Caco-2 (cell line): ENCODE measurements at regions of chr4 and their contacts with region 1.

Region 1: GRCh38 chr4:74932816-74933561 is at the start of gene PARM1:
- DNase-seq: peak; percentile 90 to 91
- H3K4me3 ChIP-seq: peak within 1 kb of the TSS; percentile 66
- H3K4me3 Mint-ChIP-seq: peak within 1 kb of the TSS; percentile 89
- H3K27ac Mint-ChIP-seq: peak within 1 kb of the TSS; percentile 53
- H3K4me1 ChIP-seq: peaks cover 5% of the 10 kb centered on the region; the same call in 1 of the 2 replicates
- H3K4me1 Mint-ChIP-seq: peaks cover 14% of the 10 kb centered on the region
- H3K27me3 ChIP-seq: peaks cover 2% of the 10 kb centered on the region
- H3K27me3 Mint-ChIP-seq: peaks cover 3% of the 10 kb centered on the region
- CTCF ChIP-seq: peak; percentile 79 to 85
- total RNA-seq, gene PARM1: 1.7 and 2.3 TPM in 2 replicates

Region 2: DNA sequence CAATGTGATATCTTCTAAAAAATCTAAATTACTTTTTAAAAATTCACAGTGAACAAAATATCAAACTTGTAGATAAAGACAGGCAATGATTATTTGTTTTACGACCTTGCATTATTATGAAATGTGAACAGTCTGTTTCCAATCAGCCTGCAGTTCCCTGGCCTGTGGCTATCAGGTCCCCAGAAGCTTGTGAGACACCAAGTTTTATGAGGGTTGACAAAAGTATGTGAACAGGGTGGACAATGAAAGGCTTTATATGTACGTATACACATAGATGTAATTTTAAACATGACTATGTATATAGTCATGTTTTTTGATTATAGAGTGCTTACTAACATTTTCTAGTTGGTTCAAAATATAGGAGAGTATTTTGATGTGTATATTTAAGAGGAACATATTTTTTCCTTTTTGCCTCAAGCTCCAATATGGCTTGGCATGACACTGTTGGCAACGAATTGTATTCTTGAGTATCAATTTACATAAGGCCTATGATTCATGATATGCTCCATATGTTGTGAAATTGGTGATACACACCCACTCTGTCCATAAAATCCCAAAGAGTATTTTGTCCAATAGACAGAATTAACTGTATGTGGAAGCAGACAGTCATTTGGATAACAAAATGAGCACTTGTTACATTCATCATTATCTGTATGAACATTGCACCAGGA is 194.4 kb before region 1 on chr4:
- CTCF ChIA-PET with region 1: no interaction called
- POLR2A ChIA-PET with region 1: no interaction called
- intact Hi-C with region 1: no loop called
- DNase-seq: no peak
- H3K4me3 ChIP-seq: no peak overlapping the region
- H3K4me3 Mint-ChIP-seq: no peak overlapping the region
- H3K27ac Mint-ChIP-seq: no peak overlapping the region
- H3K4me1 ChIP-seq: no peaks in the 10 kb centered on the region
- H3K4me1 Mint-ChIP-seq: no peaks in the 10 kb centered on the region
- H3K27me3 ChIP-seq: no peaks in the 10 kb centered on the region
- H3K27me3 Mint-ChIP-seq: no peaks in the 10 kb centered on the region
- CTCF ChIP-seq: no peak

Region 3: DNA sequence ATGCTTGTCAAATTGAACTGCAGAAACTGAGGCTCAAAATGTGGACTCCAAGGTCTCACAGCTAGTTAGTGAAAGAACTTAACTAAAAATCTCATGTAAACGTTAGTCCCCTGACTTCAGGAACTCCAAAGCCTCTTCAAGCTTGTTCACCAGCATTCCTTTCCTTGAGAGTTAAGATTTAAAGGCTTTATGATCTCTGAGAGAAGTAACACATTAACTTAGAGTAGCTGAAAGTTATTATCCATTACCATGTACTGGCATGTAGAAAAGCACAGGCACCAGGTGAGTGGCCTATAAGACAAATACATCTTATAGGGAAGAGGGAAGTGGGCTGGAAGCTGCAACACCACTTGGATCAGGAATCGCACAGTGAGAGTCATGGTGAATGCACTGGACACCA is 15.2 kb after region 1 on chr4:
- CTCF ChIA-PET with region 1: interaction called, 5 read pairs
- POLR2A ChIA-PET with region 1: no interaction called
- intact Hi-C with region 1: loop called (anchors 1 kb)
- DNase-seq: peak; percentile 44 to 64
- H3K4me3 ChIP-seq: no peak overlapping the region
- H3K4me3 Mint-ChIP-seq: peak overlapping the region; percentile 44
- H3K27ac Mint-ChIP-seq: peak overlapping the region; percentile 79
- H3K4me1 ChIP-seq: peaks cover 29% of the 10 kb centered on the region
- H3K4me1 Mint-ChIP-seq: peaks cover 21% of the 10 kb centered on the region
- H3K27me3 ChIP-seq: no peaks in the 10 kb centered on the region
- H3K27me3 Mint-ChIP-seq: no peaks in the 10 kb centered on the region
- CTCF ChIP-seq: no peak

Region 4: DNA sequence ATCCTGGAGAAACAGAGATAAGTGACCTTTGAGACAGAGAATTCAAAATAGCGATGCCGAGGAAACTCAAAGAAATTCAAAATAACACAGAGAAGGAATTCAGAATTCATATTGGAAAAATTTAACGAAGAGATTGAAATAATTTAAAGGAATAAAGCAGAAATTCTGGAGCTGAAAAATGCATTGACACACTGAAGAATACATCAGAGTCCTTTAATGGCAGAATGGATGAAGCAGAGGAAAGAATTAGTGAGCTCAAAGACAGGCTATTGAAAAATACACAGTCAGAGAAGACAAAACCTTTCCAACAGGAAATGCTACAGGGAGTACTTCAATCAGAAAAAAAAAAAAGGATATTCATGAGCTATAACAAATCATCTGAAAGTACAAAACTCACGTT is 185.8 kb after region 1 on chr4:
- CTCF ChIA-PET with region 1: no interaction called
- POLR2A ChIA-PET with region 1: no interaction called
- intact Hi-C with region 1: loop called (anchors 5 kb)
- DNase-seq: no peak
- H3K4me3 ChIP-seq: no peak overlapping the region
- H3K4me3 Mint-ChIP-seq: no peak overlapping the region
- H3K27ac Mint-ChIP-seq: no peak overlapping the region
- H3K4me1 ChIP-seq: no peaks in the 10 kb centered on the region
- H3K4me1 Mint-ChIP-seq: peaks cover 10% of the 10 kb centered on the region
- H3K27me3 ChIP-seq: no peaks in the 10 kb centered on the region
- H3K27me3 Mint-ChIP-seq: no peaks in the 10 kb centered on the region
- CTCF ChIP-seq: no peak

Region 5: GRCh38 chr4:75469896-75470295 is 536.9 kb after region 1 on chr4:
- CTCF ChIA-PET with region 1: interaction called, 6 read pairs
- POLR2A ChIA-PET with region 1: no interaction called
- intact Hi-C with region 1: loop called (anchors 1 kb)
- DNase-seq: no peak
- H3K4me3 ChIP-seq: no peak overlapping the region
- H3K4me3 Mint-ChIP-seq: no peak overlapping the region
- H3K27ac Mint-ChIP-seq: no peak overlapping the region
- H3K4me1 ChIP-seq: no peaks in the 10 kb centered on the region
- H3K4me1 Mint-ChIP-seq: no peaks in the 10 kb centered on the region
- H3K27me3 ChIP-seq: no peaks in the 10 kb centered on the region
- H3K27me3 Mint-ChIP-seq: no peaks in the 10 kb centered on the region
- CTCF ChIP-seq: no peak